Heart left ventricle (tissue), 16 donors: ENCODE measurements at regions of chr9 and their contacts with region 1.

Region 1: DNA sequence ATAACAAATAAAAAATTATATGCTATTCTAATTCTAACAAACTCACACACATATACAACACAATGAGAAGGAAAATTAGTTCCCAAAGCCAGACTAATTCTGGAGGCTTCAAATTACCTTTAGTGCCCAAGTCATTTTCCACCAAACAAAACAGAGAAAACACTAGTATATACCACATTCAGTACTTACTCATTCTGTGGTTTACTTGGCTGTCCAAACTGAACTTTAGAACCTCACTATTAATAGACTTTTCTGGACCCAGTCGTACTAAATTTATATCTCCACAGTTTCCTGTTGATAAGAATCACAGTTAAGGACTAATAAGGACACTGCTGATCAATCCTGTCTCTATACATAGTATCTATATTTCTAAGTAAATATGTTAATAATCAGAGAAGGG is 66.4 kb downstream of the SETX start:
- DNase-seq: no peak
- ATAC-seq: no peak
- H3K4me3 ChIP-seq: no peak overlapping the region
- H3K27ac ChIP-seq: peak overlapping the region in 4 of 12 donors; percentile 4 to 44 (median 7)
- H3K4me1 ChIP-seq: peaks cover 0 to 21% (median 15%) of the 10 kb centered on the region in 12 donors
- H3K27me3 ChIP-seq: no peaks in the 10 kb centered on the region
- CTCF ChIP-seq: no peak
- POLR2A ChIP-seq: no peak

Region 2: GRCh38 chr9:131149688-131150053 is 1138.7 kb before region 1 on chr9:
- intact Hi-C with region 1: loop called in 1 of 10 experiments (anchors 10 kb)
- DNase-seq: no peak
- ATAC-seq: no peak
- H3K4me3 ChIP-seq: no peak overlapping the region
- H3K27ac ChIP-seq: no peak overlapping the region
- H3K4me1 ChIP-seq: no peaks in the 10 kb centered on the region
- H3K27me3 ChIP-seq: no peaks in the 10 kb centered on the region
- CTCF ChIP-seq: no peak
- POLR2A ChIP-seq: no peak

Region 3: GRCh38 chr9:131826968-131827525 is 461.3 kb before region 1 on chr9:
- intact Hi-C with region 1: no loop called
- DNase-seq: peak in 1 of 5 donors; percentile 21
- ATAC-seq: no peak
- H3K4me3 ChIP-seq: no peak overlapping the region
- H3K27ac ChIP-seq: no peak overlapping the region
- H3K4me1 ChIP-seq: no peaks in the 10 kb centered on the region
- H3K27me3 ChIP-seq: peaks cover 0 to 49% (median 11%) of the 10 kb centered on the region in 9 donors
- CTCF ChIP-seq: no peak
- POLR2A ChIP-seq: no peak

Region 4: GRCh38 chr9:132268725-132269352 is 19.5 kb before region 1 on chr9:
- intact Hi-C with region 1: no loop called
- DNase-seq: peak in 4 of 5 donors; percentile 55 to 73 (median 62)
- ATAC-seq: peak in 3 of 4 donors; percentile 50 to 64 (median 53)
- H3K4me3 ChIP-seq: no peak overlapping the region
- H3K27ac ChIP-seq: peak overlapping the region in 8 of 12 donors; percentile 1 to 57 (median 24)
- H3K4me1 ChIP-seq: peaks cover 0 to 29% (median 10%) of the 10 kb centered on the region in 12 donors
- H3K27me3 ChIP-seq: no peaks in the 10 kb centered on the region
- CTCF ChIP-seq: peak; percentile 76 to 98 (median 88)
- POLR2A ChIP-seq: no peak

Region 5: GRCh38 chr9:132341177-132341840 is 52.9 kb after region 1 on chr9:
- intact Hi-C with region 1: loop called in 2 of 10 experiments (anchors 5 to 10 kb)
- DNase-seq: no peak
- ATAC-seq: no peak
- H3K4me3 ChIP-seq: no peak overlapping the region
- H3K27ac ChIP-seq: no peak overlapping the region
- H3K4me1 ChIP-seq: no peaks in the 10 kb centered on the region
- H3K27me3 ChIP-seq: no peaks in the 10 kb centered on the region
- CTCF ChIP-seq: no peak
- POLR2A ChIP-seq: no peak